Transverse colon (tissue), 4 donors: ENCODE measurements at regions of chr10 and their contacts with region 1.

Region 1: DNA sequence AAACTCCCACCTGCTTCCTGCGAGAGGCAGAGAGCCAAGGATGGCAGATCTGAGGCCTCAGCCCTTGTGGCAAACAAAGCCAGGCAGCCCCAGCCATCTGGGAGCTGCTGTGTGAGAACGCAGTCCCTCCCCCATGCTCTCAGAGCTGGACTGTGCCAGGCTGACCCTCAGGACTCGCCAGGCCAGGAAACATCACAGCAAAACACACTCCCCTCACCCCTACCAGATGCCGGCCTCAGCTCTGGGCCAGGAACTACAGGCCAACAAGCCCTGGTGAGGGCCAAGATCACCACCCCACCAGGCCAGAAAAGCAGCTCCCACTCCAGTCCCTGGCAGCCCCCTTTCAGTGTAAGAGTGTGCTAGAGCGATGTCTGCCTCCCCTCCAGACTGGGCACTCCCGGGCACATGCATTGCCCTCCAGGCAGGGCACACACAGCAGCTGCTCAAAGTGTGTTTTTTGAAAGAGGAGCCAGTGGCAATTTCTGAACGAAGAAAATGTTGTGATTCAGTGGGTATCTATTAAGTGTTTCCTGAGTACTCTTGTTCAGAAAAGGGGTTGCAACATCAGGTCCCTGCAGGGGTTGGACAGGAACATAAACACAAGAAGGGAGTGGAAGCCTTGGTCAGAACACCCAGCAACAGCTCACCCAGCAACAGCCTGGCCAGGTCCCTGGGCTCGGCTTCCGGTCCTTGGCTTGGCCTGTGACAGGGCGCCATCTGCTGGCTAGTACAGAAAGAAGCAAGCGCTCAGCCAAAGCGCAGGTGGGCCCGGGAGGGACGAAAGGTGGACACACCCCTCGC is 18.3 kb downstream of the LRRC20 start:
- DNase-seq: peak; percentile 92
- H3K4me3 ChIP-seq: no peak overlapping the region
- H3K27ac ChIP-seq: peak overlapping the region; percentile 76 to 93 (median 83)
- H3K4me1 ChIP-seq: peaks cover 9 to 17% (median 13%) of the 10 kb centered on the region in 4 donors
- H3K27me3 ChIP-seq: no peaks in the 10 kb centered on the region
- CTCF ChIP-seq: peak; percentile 85 to 97 (median 94)
- EP300 ChIP-seq: no peak
- POLR2A ChIP-seq: no peak

Region 2: DNA sequence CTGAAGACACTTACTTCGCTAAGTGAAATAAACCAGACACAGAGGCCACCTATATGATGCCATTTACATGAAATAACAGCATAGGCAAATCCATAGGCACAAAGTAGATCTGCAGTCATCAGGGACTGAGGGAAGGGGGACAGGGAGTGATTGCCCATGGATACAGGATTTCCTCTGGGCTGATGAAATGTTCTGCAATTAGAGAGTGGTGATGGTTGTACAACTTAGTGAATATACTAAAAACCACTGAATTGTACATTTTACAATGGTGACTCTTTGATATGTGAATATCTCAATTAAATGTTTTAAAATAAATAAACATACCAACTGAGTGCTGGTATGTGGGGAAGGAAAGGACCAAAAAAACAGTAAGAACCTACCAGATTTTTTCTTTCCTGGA is 151.3 kb before region 1 on chr10:
- in situ Hi-C with region 1: loop called in 3 of 4 experiments (anchors 5 to 10 kb)
- intact Hi-C with region 1: no loop called
- DNase-seq: no peak
- H3K4me3 ChIP-seq: no peak overlapping the region
- H3K27ac ChIP-seq: no peak overlapping the region
- H3K4me1 ChIP-seq: no peaks in the 10 kb centered on the region
- H3K27me3 ChIP-seq: no peaks in the 10 kb centered on the region
- CTCF ChIP-seq: no peak
- EP300 ChIP-seq: no peak
- POLR2A ChIP-seq: no peak

Region 3: DNA sequence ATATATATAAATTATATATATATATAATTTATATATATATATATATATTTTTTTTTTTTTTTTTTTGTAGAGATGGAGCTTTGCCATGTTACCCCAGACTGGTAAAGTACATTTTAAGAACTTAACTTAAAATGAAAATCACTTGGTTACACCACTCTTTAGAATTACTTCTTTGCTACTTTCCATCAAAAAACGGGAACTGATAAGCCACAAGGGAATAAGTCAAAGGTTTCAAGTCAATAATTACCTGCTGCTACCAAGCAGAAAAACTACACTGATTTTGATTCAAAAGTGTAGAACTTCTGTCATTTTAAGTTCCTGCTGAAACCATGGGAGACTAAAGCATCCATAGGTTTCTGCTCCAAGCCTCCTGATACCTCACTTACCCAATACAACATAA is 143.1 kb before region 1 on chr10:
- in situ Hi-C with region 1: loop called (anchors 5 to 10 kb)
- intact Hi-C with region 1: no loop called
- DNase-seq: no peak
- H3K4me3 ChIP-seq: no peak overlapping the region
- H3K27ac ChIP-seq: peak overlapping the region; percentile 19 to 36 (median 32)
- H3K4me1 ChIP-seq: peaks cover 0 to 10% (median 5%) of the 10 kb centered on the region in 4 donors
- H3K27me3 ChIP-seq: no peaks in the 10 kb centered on the region
- CTCF ChIP-seq: no peak
- EP300 ChIP-seq: no peak
- POLR2A ChIP-seq: no peak